ENCODE measurements at regions of chr1 and their contacts with region 1.

Region 1: GRCh38 chr1:161201828-161202725 is at the start of gene NDUFS2:
- DNase-seq: peak; percentile 97
- ATAC-seq: peak; percentile 99
- H3K4me3 Mint-ChIP-seq: peak within 1 kb of the TSS; percentile 92
- H3K27ac Mint-ChIP-seq: peak within 1 kb of the TSS; percentile 95
- H3K4me1 Mint-ChIP-seq: peaks cover 50% of the 10 kb centered on the region
- H3K27me3 Mint-ChIP-seq: no peaks in the 10 kb centered on the region
- total RNA-seq, gene NDUFS2: 71.8 to 92.0 TPM

Region 2: GRCh38 chr1:161159087-161159912 is 42.8 kb before region 1 on chr1 and contains the start of gene USP21:
- CTCF ChIA-PET with region 1: interaction called, 3 read pairs
- POLR2A ChIA-PET with region 1: interaction called, 3 read pairs
- intact Hi-C with region 1: loop called in 1 of 2 experiments (anchors 1 kb)
- DNase-seq: peak; percentile 95
- ATAC-seq: peak; percentile 96
- H3K4me3 Mint-ChIP-seq: peak within 1 kb of the TSS; percentile 79
- H3K27ac Mint-ChIP-seq: peak within 1 kb of the TSS; percentile 82
- H3K4me1 Mint-ChIP-seq: peaks cover 50% of the 10 kb centered on the region
- H3K27me3 Mint-ChIP-seq: no peaks in the 10 kb centered on the region
- total RNA-seq, gene USP21: 25.1 to 32.0 TPM

Region 3: DNA sequence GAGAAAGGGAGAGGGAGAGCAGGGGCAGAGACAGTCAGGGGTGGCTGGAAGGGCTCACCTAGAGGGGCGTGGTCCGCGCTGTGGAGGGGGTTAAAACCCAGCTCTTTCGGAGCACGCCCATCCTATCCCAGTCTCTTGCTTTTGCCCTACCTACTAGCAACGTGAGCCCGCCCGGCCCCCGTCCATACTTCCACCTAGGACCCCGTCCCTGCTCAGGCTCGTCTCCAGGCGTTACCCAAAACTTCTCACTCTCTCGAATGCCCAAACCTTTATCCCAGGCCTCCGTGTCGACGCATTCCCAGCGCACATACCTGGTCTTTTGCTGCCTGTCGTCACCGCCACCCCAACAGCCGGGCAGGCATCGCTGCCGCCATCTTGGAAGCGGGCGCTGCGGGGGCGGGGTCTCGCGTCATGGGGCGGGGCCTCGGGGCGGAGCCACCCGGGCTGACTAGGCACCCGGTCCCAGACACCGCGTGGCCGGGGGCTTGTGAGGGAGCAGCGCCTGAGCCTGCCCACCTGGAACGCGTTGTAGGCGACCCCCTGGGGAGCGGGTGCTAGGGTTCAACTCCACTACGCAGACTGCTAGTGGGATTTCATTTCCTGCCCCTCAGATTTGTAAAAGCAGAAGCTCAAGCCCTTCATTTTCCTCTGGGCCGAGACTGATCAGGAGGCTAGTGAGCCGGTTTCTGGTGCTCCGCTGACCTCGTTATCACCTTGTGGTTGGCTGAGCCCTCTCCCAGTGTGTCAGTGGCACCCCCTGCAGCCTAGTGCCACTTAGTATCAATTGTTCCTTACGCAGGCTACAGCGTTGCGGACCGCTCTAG is 24.8 kb before region 1 on chr1 and contains the start of gene B4GALT3:
- CTCF ChIA-PET with region 1: interaction called, 7 read pairs
- POLR2A ChIA-PET with region 1: interaction called, 4 read pairs
- intact Hi-C with region 1: loop called in 1 of 2 experiments (anchors 1 kb)
- DNase-seq: peak; percentile 98
- ATAC-seq: peak; percentile 86
- H3K4me3 Mint-ChIP-seq: peak within 1 kb of the TSS; percentile 91
- H3K27ac Mint-ChIP-seq: peak within 1 kb of the TSS; percentile 98
- H3K4me1 Mint-ChIP-seq: peaks cover 57% of the 10 kb centered on the region
- H3K27me3 Mint-ChIP-seq: no peaks in the 10 kb centered on the region
- total RNA-seq, gene B4GALT3: 40.5 to 51.8 TPM

Region 4: DNA sequence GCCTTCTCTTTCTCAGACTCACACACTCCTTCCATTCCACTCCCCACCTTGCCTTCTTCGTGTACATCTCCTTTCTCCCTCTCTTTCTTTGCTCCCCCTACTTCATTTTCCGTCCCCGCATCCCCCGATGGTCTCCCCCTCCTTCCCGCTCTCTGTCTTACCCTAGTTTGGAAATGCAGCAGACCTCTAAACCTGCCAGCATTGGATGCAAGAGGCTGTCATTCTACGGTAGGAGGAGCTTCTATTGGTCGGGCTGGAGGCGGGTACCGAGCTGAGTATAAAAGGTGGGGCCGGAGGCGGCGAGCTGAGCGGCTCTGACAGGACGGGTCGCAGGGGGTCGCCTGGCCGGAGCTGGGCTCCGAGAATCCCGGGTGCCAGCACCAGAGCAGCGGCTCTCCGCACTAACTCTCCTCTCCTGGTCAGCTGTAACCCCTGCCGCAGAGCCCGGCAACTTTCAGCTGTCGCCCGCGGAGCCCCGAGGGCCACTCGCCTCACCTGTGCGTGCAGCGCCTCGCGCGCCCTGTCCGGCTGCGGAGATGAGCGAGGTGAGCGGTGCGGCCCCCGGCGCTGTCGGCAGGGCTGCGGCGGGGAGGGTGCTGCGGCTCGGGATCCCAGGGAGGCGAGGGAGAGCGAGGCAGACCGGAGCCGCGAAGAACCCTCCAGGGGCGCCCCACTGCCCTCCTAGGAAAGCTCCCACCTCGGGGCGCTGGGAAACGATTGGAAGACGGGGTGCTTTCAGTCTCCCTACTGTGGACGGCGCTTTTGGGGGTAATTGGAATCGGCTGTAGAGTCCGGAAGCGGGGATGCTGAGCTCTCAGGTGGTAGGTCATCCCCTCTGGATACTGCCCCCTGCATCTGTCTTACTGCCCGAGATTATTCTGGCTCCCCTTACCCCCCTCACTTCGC is 56.6 kb after region 1 on chr1 and contains the start of gene PCP4L1:
- CTCF ChIA-PET with region 1: no interaction called
- POLR2A ChIA-PET with region 1: no interaction called
- intact Hi-C with region 1: no loop called
- DNase-seq: peak; percentile 70
- ATAC-seq: peak; percentile 96
- H3K4me3 Mint-ChIP-seq: peak within 1 kb of the TSS; percentile 56
- H3K27ac Mint-ChIP-seq: no peak within 1 kb of the TSS
- H3K4me1 Mint-ChIP-seq: peaks cover 8% of the 10 kb centered on the region
- H3K27me3 Mint-ChIP-seq: peaks cover 56% of the 10 kb centered on the region
- total RNA-seq, gene PCP4L1: 0.21 to 0.27 TPM

Region 5: GRCh38 chr1:161305867-161306519 is 103.9 kb after region 1 on chr1:
- CTCF ChIA-PET with region 1: interaction called, 3 read pairs
- POLR2A ChIA-PET with region 1: no interaction called
- intact Hi-C with region 1: loop called in 1 of 2 experiments (anchors 5 kb)
- DNase-seq: peak; percentile 91
- ATAC-seq: peak; percentile 98
- H3K4me3 Mint-ChIP-seq: peak overlapping the region; percentile 96
- H3K27ac Mint-ChIP-seq: peak overlapping the region; percentile 88
- H3K4me1 Mint-ChIP-seq: peaks cover 34% of the 10 kb centered on the region
- H3K27me3 Mint-ChIP-seq: no peaks in the 10 kb centered on the region

Region 6: GRCh38 chr1:161389691-161390558 is 187.8 kb after region 1 on chr1:
- CTCF ChIA-PET with region 1: interaction called, 7 read pairs
- POLR2A ChIA-PET with region 1: interaction called, 5 read pairs
- intact Hi-C with region 1: loop called in 1 of 2 experiments (anchors 1 kb)
- DNase-seq: peak; percentile 97
- ATAC-seq: peak; percentile 83
- H3K4me3 Mint-ChIP-seq: peak overlapping the region; percentile 87
- H3K27ac Mint-ChIP-seq: peak overlapping the region; percentile 96
- H3K4me1 Mint-ChIP-seq: peaks cover 43% of the 10 kb centered on the region
- H3K27me3 Mint-ChIP-seq: no peaks in the 10 kb centered on the region

Region 7: DNA sequence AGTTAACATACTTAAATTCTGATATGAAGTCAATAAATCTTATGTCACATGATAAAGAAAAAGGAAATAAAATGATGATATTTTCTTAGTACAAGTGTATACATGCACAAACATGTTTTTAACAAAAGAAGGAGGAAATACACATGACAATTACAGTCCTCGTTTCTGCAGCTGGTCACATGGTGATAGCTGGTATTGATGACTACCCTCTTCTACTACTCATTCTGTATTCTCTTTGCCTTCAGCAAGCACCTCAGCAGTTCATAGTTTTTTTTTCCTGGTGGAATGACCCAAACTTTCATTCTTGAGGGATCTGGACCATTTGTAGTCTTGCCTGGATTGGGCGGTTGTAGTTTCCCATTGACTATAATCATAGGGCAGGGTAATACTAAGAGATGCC is 230.0 kb after region 1 on chr1:
- CTCF ChIA-PET with region 1: no interaction called
- POLR2A ChIA-PET with region 1: no interaction called
- intact Hi-C with region 1: no loop called
- DNase-seq: no peak
- ATAC-seq: no peak
- H3K4me3 Mint-ChIP-seq: no peak overlapping the region
- H3K27ac Mint-ChIP-seq: no peak overlapping the region
- H3K4me1 Mint-ChIP-seq: peaks cover 10% of the 10 kb centered on the region
- H3K27me3 Mint-ChIP-seq: peaks cover 50% of the 10 kb centered on the region

Measured in activated CD4-positive, alpha-beta T cell treated with anti-CD3 and anti-CD28 coated beads for 36 hours (primary cell).